SK-N-SH (cell line): ENCODE measurements at regions of chr22 and their contacts with region 1.

Region 1: DNA sequence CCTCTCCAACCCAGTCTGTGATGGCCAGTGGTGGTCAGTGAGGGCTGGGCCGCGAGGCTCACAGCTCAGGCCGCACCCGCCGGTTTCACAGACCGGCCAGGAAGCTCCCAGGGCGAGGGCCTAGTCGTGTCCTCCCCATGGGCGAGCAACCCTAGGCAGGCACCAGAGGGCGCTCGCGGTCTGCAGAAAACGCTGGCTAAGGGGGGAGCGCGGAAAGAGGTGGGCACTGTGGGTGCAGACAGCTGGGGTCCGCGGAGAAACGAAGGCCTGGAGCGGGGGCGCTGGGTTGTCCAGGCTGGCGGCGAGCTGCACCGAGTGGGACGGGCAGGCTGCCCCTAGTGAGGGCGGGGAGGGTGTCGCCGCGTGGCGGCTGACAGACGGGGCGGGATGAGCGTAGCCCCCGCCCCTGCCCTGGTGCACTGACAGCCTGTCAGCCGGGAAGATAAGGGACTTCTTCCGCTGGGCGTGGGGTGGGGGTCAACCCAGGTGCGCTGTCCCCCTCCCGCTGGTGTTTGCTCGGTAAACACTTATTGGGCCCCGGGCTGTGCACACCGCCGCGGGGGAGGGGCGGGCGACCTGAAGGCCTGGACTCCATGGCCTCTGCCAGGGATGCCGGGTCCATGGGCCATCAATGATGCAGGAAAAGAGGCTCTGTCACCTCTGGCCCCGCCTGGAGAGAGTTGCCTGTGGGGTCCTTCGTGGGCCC is 7.5 kb downstream of the GP1BB start:
- DNase-seq: peak; percentile 96
- H3K4me3 ChIP-seq: peak overlapping the region; percentile 47 to 65; a peak in 3 of 4 replicates
- H3K27ac ChIP-seq: no peak overlapping the region
- H3K4me1 ChIP-seq: peaks cover 0 to 26% of the 10 kb centered on the region in 2 experiments; a peak in 1 of 4 replicates
- H3K27me3 ChIP-seq: no peaks in the 10 kb centered on the region
- CTCF ChIP-seq: peak; percentile 91
- EP300 ChIP-seq: no peak
- RAD21 ChIP-seq: peak; percentile 97

Region 2: DNA sequence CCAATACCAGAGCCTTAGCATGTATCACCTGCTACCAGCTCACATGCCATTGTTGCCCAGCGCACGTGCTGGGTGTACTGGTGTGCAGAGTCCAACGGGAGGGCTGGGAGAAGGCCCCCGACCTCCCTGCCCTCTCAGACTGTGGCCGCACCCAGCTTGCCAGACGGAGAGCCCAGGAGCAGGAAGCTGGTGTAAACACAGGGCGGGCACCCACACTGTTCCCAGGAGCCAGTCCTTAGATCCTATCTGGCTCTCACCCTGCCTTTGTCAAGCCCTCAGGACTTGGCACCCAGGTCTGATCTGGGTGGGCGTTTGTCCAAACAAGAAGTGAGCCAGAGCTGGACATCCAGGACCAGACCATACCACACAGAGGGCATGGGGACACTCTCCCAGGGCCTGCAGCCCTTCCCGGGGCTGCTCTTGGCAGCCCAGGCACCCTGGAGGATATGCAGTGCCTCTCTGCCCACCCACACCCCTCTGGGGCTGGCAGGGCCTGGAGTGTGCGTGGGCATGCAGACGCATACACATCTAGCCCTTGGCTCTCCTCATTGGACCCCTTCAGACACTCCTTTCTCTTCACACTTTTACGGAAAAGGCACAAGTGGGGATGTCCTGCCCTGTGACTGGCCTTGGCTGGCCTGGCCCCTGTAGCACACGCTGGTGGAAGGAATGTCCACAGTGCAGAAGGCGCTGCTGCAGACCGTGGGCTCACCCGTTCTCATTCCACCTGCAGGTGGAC is 186.7 kb before region 1 on chr22:
- CTCF ChIA-PET with region 1: no interaction called
- POLR2A ChIA-PET with region 1: no interaction called
- DNase-seq: peak; percentile 44
- H3K4me3 ChIP-seq: no peak overlapping the region
- H3K27ac ChIP-seq: no peak overlapping the region; a peak in 1 of 4 replicates
- H3K4me1 ChIP-seq: peaks cover 0 to 11% of the 10 kb centered on the region in 2 experiments; a peak in 1 of 4 replicates
- H3K27me3 ChIP-seq: no peaks in the 10 kb centered on the region
- CTCF ChIP-seq: no peak
- EP300 ChIP-seq: no peak
- RAD21 ChIP-seq: no peak

Region 3: GRCh38 chr22:19669570-19669969 is 61.2 kb before region 1 on chr22:
- CTCF ChIA-PET with region 1: interaction called, 10 read pairs
- POLR2A ChIA-PET with region 1: no interaction called
- DNase-seq: no peak
- H3K4me3 ChIP-seq: no peak overlapping the region
- H3K27ac ChIP-seq: no peak overlapping the region
- H3K4me1 ChIP-seq: peaks cover 6 to 10% of the 10 kb centered on the region in 2 experiments; a peak in 2 of 4 replicates
- H3K27me3 ChIP-seq: no peaks in the 10 kb centered on the region
- CTCF ChIP-seq: no peak
- EP300 ChIP-seq: no peak
- RAD21 ChIP-seq: no peak

Region 4: GRCh38 chr22:19756288-19757128 is 25.7 kb after region 1 on chr22:
- CTCF ChIA-PET with region 1: interaction called, 15 read pairs
- POLR2A ChIA-PET with region 1: no interaction called
- DNase-seq: peak; percentile 78
- H3K4me3 ChIP-seq: no peak overlapping the region
- H3K27ac ChIP-seq: no peak overlapping the region
- H3K4me1 ChIP-seq: peaks cover 0 to 6% of the 10 kb centered on the region in 2 experiments; a peak in 2 of 4 replicates
- H3K27me3 ChIP-seq: peaks cover 53% of the 10 kb centered on the region
- CTCF ChIP-seq: peak; percentile 47
- EP300 ChIP-seq: no peak
- RAD21 ChIP-seq: peak; percentile 46

Region 5: DNA sequence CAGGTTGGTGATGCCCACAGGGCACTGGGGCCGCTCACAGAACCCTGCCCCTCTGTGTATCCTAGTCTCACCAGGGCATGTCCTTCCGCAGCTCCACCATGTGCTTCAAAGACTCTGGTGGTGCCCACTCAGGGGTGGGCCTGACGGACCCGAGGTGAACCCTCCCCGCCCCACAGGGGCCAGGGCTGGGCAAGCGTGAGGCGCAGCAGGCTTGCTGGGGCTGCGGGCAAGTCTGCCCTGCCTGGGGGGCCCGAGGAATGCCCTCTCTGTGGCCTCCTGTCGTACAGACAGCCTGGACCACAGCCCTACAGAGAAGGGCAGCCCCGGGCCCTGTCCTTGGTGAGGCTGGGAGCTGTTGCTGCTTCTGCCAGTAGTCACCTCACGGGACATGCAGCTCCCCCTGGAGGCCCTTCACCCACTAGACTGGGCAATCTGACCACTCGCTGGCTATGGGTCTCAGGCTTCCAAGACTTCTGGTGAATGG is 70.0 kb after region 1 on chr22:
- CTCF ChIA-PET with region 1: interaction called, 19 read pairs
- POLR2A ChIA-PET with region 1: no interaction called
- DNase-seq: peak; percentile 61
- H3K4me3 ChIP-seq: no peak overlapping the region
- H3K27ac ChIP-seq: no peak overlapping the region; a peak in 1 of 4 replicates
- H3K4me1 ChIP-seq: peaks cover 17 to 69% of the 10 kb centered on the region in 2 experiments; a peak in 3 of 4 replicates
- H3K27me3 ChIP-seq: no peaks in the 10 kb centered on the region
- CTCF ChIP-seq: peak; percentile 52
- EP300 ChIP-seq: no peak
- RAD21 ChIP-seq: peak; percentile 33

Region 6: GRCh38 chr22:19868773-19869471 is 138.1 kb after region 1 on chr22:
- CTCF ChIA-PET with region 1: interaction called, 64 read pairs
- POLR2A ChIA-PET with region 1: no interaction called
- DNase-seq: no peak
- H3K4me3 ChIP-seq: no peak overlapping the region
- H3K27ac ChIP-seq: no peak overlapping the region
- H3K4me1 ChIP-seq: no peaks in the 10 kb centered on the region; a peak in 1 of 4 replicates
- H3K27me3 ChIP-seq: no peaks in the 10 kb centered on the region
- CTCF ChIP-seq: no peak
- EP300 ChIP-seq: no peak
- RAD21 ChIP-seq: no peak

Region 7: DNA sequence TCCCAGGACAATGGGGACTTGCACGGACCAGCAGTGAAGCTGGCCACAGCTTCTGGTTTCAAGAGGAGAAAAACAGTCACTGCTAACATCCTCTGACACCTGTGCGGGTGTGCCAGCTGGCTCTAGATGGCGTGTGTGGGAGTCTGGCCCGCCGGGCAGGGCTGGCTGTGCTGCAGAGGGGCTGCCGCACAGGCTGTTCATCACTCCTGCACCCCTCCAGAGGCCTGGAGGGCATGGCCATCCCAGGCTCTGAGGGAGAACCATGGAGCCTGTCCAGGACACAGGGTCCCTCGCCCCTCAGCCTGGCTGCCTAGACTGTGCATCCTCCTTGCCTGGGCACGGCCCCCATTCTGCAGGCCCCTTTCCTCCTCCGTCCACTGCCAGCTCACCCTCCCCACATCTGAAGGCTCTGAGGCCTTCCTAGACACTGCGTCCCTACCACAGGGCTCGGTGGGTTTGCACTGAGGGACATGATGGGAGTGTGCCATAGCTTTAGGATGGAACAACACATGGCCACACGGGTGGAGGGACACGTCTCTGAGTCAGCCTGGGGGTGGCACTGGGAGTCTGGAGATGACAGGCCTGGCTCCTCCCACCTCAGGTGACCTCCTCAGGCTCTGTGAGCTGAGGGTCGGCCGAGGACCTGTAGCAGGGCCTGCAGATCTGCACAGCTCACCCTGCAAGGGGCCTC is 166.0 kb after region 1 on chr22:
- CTCF ChIA-PET with region 1: interaction called, 116 read pairs
- POLR2A ChIA-PET with region 1: no interaction called
- DNase-seq: peak; percentile 81
- H3K4me3 ChIP-seq: no peak overlapping the region
- H3K27ac ChIP-seq: peak overlapping the region in 1 of 2 experiments; percentile 82; a peak in 2 of 4 replicates
- H3K4me1 ChIP-seq: peaks cover 14 to 47% of the 10 kb centered on the region in 2 experiments; a peak in 3 of 4 replicates
- H3K27me3 ChIP-seq: no peaks in the 10 kb centered on the region
- CTCF ChIP-seq: no peak
- EP300 ChIP-seq: no peak
- RAD21 ChIP-seq: peak; percentile 28

Region 8: GRCh38 chr22:19932367-19933206 is 201.8 kb after region 1 on chr22:
- CTCF ChIA-PET with region 1: interaction called, 10 read pairs
- POLR2A ChIA-PET with region 1: no interaction called
- DNase-seq: no peak
- H3K4me3 ChIP-seq: no peak overlapping the region
- H3K27ac ChIP-seq: peak overlapping the region in 1 of 2 experiments; percentile 8; a peak in 1 of 4 replicates
- H3K4me1 ChIP-seq: peaks cover 0 to 18% of the 10 kb centered on the region in 2 experiments; a peak in 1 of 4 replicates
- H3K27me3 ChIP-seq: no peaks in the 10 kb centered on the region
- CTCF ChIP-seq: no peak
- EP300 ChIP-seq: no peak
- RAD21 ChIP-seq: no peak